ENCODE measurements at regions of chr18 and their contacts with region 1.

Region 1: GRCh38 chr18:58195278-58195765 is 151.3 kb downstream of the NEDD4L start:
- DNase-seq: no peak
- ATAC-seq: peak in 1 of 4 donors; percentile 21
- H3K4me3 ChIP-seq: peak overlapping the region; percentile 41
- H3K27ac ChIP-seq: no peak overlapping the region
- H3K4me1 ChIP-seq: no peaks in the 10 kb centered on the region
- H3K27me3 ChIP-seq: no peaks in the 10 kb centered on the region
- CTCF ChIP-seq: no peak

Region 2: GRCh38 chr18:57891707-57892391 is 303.5 kb before region 1 on chr18:
- intact Hi-C with region 1: no loop called
- DNase-seq: no peak
- ATAC-seq: no peak
- H3K4me3 ChIP-seq: no peak overlapping the region
- H3K27ac ChIP-seq: no peak overlapping the region
- H3K4me1 ChIP-seq: no peaks in the 10 kb centered on the region
- H3K27me3 ChIP-seq: peaks cover 0 to 2% (median 0%) of the 10 kb centered on the region in 3 donors
- CTCF ChIP-seq: no peak

Region 3: GRCh38 chr18:58015065-58015780 is 180.1 kb before region 1 on chr18:
- intact Hi-C with region 1: no loop called
- DNase-seq: no peak
- ATAC-seq: no peak
- H3K4me3 ChIP-seq: no peak overlapping the region
- H3K27ac ChIP-seq: no peak overlapping the region
- H3K4me1 ChIP-seq: no peaks in the 10 kb centered on the region
- H3K27me3 ChIP-seq: no peaks in the 10 kb centered on the region
- CTCF ChIP-seq: no peak

Region 4: DNA sequence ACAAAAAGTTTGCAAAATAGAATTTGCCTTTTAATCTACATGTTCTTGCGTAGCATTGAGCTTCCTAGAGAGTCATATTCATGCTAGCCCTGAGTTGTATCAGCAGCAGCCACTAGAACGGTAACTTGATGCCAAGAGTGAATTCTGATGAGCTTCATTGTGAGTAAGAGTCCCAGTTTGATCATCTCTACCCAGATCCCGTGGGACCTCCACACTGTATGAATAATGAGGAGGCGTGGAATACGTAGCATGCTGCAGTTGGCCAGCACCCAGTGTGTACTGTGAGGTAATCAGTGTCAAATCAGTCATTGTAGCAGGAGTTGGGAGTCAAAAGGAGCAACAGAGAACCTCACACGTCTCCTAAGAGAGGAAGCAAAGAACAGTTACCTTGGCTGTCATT is 46.6 kb after region 1 on chr18:
- intact Hi-C with region 1: loop called in 1 of 2 experiments (anchors 5 kb)
- DNase-seq: peak in 1 of 2 donors; percentile 36
- ATAC-seq: peak; percentile 56 to 77 (median 74)
- H3K4me3 ChIP-seq: no peak overlapping the region
- H3K27ac ChIP-seq: no peak overlapping the region
- H3K4me1 ChIP-seq: peaks cover 5% of the 10 kb centered on the region
- H3K27me3 ChIP-seq: no peaks in the 10 kb centered on the region
- CTCF ChIP-seq: no peak

Measured in psoas muscle (tissue), 8 donors.